B cell (primary cell): ENCODE measurements at regions of chr5 and their contacts with region 1.

Region 1: GRCh38 chr5:111550279-111551020 is 38.1 kb upstream of the STARD4 start:
- DNase-seq: peak; percentile 80
- ATAC-seq: peak; percentile 81
- H3K4me3 ChIP-seq: no peak overlapping the region
- H3K4me3 Mint-ChIP-seq: no peak overlapping the region
- H3K27ac ChIP-seq: no peak overlapping the region
- H3K27ac Mint-ChIP-seq: no peak overlapping the region
- H3K4me1 ChIP-seq: peaks cover 2 to 4% of the 10 kb centered on the region in 2 donors
- H3K4me1 Mint-ChIP-seq: peaks cover 4% of the 10 kb centered on the region
- H3K27me3 ChIP-seq: peaks cover 0 to 3% (median 0%) of the 10 kb centered on the region in 4 experiments
- H3K27me3 Mint-ChIP-seq: peaks cover 11% of the 10 kb centered on the region
- CTCF ChIP-seq: peak; percentile 80

Region 2: GRCh38 chr5:111158105-111158744 is 392.2 kb before region 1 on chr5:
- CTCF ChIA-PET with region 1: interaction called, 3 read pairs
- POLR2A ChIA-PET with region 1: no interaction called
- intact Hi-C with region 1: loop called (anchors 1 kb)
- DNase-seq: peak; percentile 70
- ATAC-seq: peak; percentile 61
- H3K4me3 ChIP-seq: no peak overlapping the region
- H3K4me3 Mint-ChIP-seq: no peak overlapping the region
- H3K27ac ChIP-seq: no peak overlapping the region
- H3K27ac Mint-ChIP-seq: no peak overlapping the region
- H3K4me1 ChIP-seq: no peaks in the 10 kb centered on the region
- H3K4me1 Mint-ChIP-seq: no peaks in the 10 kb centered on the region
- H3K27me3 ChIP-seq: no peaks in the 10 kb centered on the region
- H3K27me3 Mint-ChIP-seq: peaks cover 33% of the 10 kb centered on the region
- CTCF ChIP-seq: peak; percentile 100

Region 3: DNA sequence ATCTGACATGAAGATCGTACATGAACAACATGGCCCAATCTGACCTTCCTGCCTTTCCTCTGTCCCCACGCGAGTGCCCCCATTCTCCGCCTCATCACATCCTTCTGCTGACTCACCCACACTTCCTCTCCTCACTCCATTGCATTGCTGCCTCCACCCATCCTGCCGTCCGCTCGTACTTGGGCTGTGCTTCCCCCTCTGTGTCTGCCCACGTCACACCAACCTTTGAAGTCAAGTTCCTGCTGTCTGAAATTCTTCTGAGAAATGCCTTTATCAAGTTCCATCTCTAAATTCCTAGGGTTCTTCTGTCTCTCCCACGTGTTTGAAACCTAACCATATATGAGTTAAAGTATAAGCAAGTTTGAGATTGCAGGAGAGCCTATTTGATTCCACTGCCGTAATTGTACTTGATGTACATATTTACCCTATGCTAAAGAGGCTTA is 20.1 kb before region 1 on chr5:
- CTCF ChIA-PET with region 1: interaction called, 14 read pairs
- POLR2A ChIA-PET with region 1: no interaction called
- intact Hi-C with region 1: no loop called
- DNase-seq: peak; percentile 89
- ATAC-seq: peak; percentile 100
- H3K4me3 ChIP-seq: peak overlapping the region in 1 of 5 experiments; percentile 8
- H3K4me3 Mint-ChIP-seq: peak overlapping the region; percentile 53
- H3K27ac ChIP-seq: peak overlapping the region; percentile 32 to 83
- H3K27ac Mint-ChIP-seq: peak overlapping the region; percentile 69
- H3K4me1 ChIP-seq: peaks cover 13 to 17% of the 10 kb centered on the region in 2 donors
- H3K4me1 Mint-ChIP-seq: peaks cover 20% of the 10 kb centered on the region
- H3K27me3 ChIP-seq: no peaks in the 10 kb centered on the region
- H3K27me3 Mint-ChIP-seq: peaks cover 3% of the 10 kb centered on the region
- CTCF ChIP-seq: no peak

Region 4: GRCh38 chr5:111655169-111655924 is 104.9 kb after region 1 on chr5:
- CTCF ChIA-PET with region 1: no interaction called
- POLR2A ChIA-PET with region 1: no interaction called
- intact Hi-C with region 1: no loop called
- DNase-seq: no peak
- ATAC-seq: no peak
- H3K4me3 ChIP-seq: no peak overlapping the region
- H3K4me3 Mint-ChIP-seq: no peak overlapping the region
- H3K27ac ChIP-seq: no peak overlapping the region
- H3K27ac Mint-ChIP-seq: no peak overlapping the region
- H3K4me1 ChIP-seq: no peaks in the 10 kb centered on the region
- H3K4me1 Mint-ChIP-seq: no peaks in the 10 kb centered on the region
- H3K27me3 ChIP-seq: no peaks in the 10 kb centered on the region
- H3K27me3 Mint-ChIP-seq: no peaks in the 10 kb centered on the region
- CTCF ChIP-seq: no peak

Region 5: GRCh38 chr5:111834926-111835598 is 284.6 kb after region 1 on chr5:
- CTCF ChIA-PET with region 1: interaction called, 3 read pairs
- POLR2A ChIA-PET with region 1: no interaction called
- intact Hi-C with region 1: loop called (anchors 5 kb)
- DNase-seq: peak; percentile 8
- ATAC-seq: no peak
- H3K4me3 ChIP-seq: no peak overlapping the region
- H3K4me3 Mint-ChIP-seq: no peak overlapping the region
- H3K27ac ChIP-seq: no peak overlapping the region
- H3K27ac Mint-ChIP-seq: no peak overlapping the region
- H3K4me1 ChIP-seq: no peaks in the 10 kb centered on the region
- H3K4me1 Mint-ChIP-seq: no peaks in the 10 kb centered on the region
- H3K27me3 ChIP-seq: no peaks in the 10 kb centered on the region
- H3K27me3 Mint-ChIP-seq: no peaks in the 10 kb centered on the region
- CTCF ChIP-seq: no peak

Region 6: DNA sequence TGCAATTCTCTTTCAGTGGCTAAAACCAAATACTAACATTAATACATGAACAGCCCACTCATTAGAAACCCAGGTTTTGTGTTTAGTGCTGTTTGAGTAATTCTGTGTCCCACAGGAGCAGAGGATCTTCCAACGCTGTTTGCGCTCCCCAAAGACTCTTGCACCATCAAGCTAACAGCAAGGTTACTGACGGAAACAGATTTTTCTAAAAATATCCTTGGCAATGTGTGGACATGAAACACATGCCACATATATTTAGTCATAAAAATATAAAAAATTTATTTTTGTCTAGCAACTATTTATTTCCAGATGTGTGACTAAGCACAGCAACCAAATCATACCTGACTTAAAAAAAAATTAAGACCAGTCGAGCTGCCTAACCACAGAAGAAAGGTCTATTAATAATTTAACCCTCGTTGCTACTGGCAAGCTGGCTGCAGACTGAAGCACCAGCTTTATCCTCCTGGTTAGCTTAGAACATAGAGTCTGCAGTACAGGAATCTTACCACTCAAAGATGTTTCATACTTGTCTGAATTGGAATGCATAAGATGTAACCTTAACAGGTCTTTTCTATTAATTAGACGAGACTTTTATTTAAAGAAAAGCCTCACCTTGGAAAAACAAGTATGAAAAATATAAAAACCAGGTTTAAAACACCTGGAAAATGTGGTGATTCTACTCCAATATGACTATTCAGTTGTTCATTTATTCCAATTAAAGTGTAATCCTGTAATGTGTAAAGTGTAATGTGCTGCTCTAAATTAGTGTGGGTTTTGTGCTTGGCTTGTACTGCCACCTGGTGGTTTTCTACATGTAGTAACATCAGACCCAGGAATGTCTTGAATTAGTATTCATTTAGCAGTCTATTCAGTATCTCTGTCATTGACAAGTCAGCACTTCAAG is 596.1 kb after region 1 on chr5:
- CTCF ChIA-PET with region 1: interaction called, 48 read pairs
- POLR2A ChIA-PET with region 1: no interaction called
- intact Hi-C with region 1: loop called (anchors 1 kb)
- DNase-seq: peak; percentile 77
- ATAC-seq: peak; percentile 90
- H3K4me3 ChIP-seq: no peak overlapping the region
- H3K4me3 Mint-ChIP-seq: no peak overlapping the region
- H3K27ac ChIP-seq: no peak overlapping the region
- H3K27ac Mint-ChIP-seq: no peak overlapping the region
- H3K4me1 ChIP-seq: no peaks in the 10 kb centered on the region
- H3K4me1 Mint-ChIP-seq: no peaks in the 10 kb centered on the region
- H3K27me3 ChIP-seq: peaks cover 0 to 5% (median 0%) of the 10 kb centered on the region in 4 experiments
- H3K27me3 Mint-ChIP-seq: peaks cover 16% of the 10 kb centered on the region
- CTCF ChIP-seq: peak; percentile 91